ENCODE measurements at regions of chr3 and their contacts with region 1.

Region 1: DNA sequence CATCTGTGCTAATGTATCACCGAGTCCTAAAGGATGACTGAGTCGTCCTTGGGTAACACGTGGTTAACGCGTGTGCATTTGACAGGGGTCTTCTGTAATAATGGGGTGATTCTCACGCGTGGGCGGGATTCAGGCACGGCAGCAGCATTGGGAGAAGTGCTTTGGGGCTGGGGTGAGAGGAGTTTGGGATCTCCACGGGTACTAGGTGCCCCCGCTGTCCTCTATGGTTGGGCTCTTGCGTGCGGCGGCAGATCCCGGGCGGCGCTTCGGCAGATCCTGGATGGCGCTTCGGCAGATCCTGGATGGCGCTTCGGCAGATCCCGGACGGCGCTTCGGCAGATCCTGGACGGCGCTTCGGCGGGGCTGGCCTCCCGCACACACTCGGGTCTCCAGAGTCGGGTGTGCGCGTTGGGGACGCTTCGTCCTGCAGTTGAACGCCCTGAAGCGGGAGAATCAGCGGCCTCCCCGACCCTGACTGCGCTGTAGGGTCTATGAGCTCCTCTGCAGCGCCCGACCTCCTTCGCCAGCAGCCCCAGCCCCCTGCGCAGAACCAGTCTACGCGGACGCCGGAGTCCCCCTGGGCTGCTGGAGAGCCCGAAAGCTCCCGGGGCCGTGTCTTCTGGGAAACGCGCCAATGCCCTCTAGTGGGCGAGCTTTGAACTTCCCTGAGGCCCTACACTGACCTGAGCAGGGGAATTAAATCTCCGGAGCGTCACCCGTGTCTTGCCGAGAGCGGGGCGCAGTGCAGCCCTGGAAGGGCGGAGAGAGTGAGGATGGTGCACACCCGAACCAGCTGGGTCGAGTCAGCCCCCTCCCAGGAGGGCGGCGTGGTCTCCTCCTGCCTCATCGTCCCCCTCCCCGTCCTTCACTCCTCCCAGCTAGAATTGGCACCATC is 48.1 kb upstream of the EPHB3 start:
- DNase-seq: no peak
- H3K4me3 ChIP-seq: peak overlapping the region; percentile 52
- CTCF ChIP-seq: peak; percentile 84

Region 2: DNA sequence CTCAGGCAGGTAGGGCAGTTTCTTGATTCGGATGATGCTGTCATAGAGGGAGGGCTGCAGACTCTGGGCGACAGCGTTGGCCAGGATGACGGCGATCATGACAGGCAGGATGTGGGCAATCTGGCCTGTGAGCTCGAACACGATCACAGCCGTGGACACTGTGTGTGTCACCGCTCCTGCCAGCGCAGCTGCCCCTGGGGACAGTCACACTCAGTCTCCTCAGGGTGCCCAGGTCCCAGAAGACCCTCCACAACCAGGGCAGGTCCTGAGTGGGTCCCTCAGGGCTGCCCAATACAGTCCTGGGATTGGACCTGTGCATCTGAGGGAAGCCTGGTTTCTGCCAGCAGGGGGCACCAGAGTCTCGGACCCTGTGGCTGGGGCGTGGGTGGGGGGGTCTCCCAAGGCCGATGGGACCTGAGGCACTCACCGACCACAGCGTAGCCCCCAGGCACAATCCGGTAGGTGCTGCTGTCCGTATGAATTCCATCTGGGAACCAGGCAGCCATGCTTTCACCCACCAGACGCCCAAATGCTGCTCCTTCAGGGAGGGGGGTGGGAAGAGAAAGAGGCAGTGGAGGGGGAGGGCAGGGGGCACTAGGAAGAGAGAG is 159.3 kb before region 1 on chr3:
- CTCF ChIA-PET with region 1: interaction called, 15 read pairs
- POLR2A ChIA-PET with region 1: no interaction called
- DNase-seq: no peak
- H3K4me3 ChIP-seq: no peak overlapping the region
- CTCF ChIP-seq: peak; percentile 77

Region 3: GRCh38 chr3:184423561-184423960 is 90.0 kb before region 1 on chr3:
- CTCF ChIA-PET with region 1: interaction called, 30 read pairs
- POLR2A ChIA-PET with region 1: no interaction called
- DNase-seq: no peak
- H3K4me3 ChIP-seq: no peak overlapping the region
- CTCF ChIP-seq: no peak

Region 4: DNA sequence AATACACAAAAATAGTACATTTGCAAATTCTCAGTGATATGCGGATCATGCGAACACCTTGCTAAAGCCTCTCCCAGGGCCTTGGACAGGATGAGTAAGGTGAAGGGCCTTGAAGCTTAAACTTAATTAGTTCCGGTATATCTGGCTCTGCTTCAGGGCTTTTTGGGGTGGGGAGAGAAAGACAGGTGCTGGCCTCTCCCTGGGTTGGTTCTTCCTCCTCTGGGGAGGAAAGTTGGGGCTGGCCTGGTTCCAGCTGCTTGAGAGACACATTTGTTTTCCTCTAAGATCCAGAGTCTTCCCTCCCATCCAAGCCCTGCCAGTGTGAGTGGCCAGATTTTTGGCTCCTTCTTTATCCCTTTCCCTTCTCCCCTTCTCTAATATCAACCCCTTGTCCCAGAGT is 16.6 kb before region 1 on chr3:
- CTCF ChIA-PET with region 1: interaction called, 43 read pairs
- POLR2A ChIA-PET with region 1: no interaction called
- DNase-seq: no peak
- H3K4me3 ChIP-seq: no peak overlapping the region
- CTCF ChIP-seq: no peak

Region 5: DNA sequence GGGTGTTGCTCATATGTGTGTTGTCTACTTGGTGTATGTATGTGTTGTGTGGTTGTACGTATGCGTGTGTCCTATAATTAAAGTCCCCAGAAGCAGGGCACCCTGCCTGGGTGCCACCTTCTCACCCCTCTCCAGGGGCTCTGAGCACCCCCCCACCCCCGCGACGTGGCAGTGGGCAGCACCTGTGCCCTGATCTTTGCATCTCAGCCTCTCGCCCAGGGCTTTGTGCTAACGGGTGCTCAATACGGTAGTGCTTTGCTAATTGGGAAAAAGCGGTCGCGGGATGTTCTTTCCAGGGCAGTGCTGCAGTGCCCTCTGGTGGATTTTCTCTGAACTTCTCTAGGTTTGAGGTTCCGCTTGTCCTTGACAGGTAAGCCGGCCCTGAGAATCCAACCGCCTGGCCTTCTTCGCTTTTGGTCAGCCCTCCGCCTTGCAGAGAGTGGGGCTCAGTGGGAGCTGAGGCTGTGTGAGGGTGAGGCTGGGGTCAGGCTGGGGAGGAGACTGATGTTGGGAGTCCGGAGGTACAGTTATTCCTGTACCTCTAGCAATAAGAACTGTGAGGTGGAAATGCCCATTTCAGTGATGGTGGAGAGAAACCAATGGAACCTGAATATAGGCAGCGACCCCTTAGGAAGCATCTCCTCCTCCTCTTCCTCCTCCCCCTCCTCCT is 30.5 kb after region 1 on chr3:
- CTCF ChIA-PET with region 1: interaction called, 15 read pairs
- POLR2A ChIA-PET with region 1: no interaction called
- DNase-seq: no peak
- H3K4me3 ChIP-seq: no peak overlapping the region
- CTCF ChIP-seq: peak; percentile 71

Region 6: DNA sequence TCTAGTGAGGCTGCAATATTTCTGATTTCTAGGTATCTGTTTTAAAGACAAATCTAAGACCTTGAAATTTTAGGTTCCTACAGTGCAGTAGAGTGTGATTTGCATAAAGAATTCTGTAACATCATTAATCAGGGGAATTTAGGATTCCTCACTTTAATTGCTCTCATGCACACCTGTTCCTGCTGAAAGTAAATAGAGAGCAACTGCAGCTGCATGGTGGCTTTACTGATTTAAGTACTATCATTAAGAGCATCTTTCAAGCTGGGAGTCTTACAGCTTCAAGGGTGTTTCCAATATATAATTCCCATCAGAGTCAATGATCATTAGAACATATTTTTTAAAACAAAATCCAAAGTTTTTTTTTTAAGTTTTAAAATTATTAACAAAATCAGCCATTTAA is 675.3 kb after region 1 on chr3:
- CTCF ChIA-PET with region 1: no interaction called
- POLR2A ChIA-PET with region 1: no interaction called
- DNase-seq: no peak
- H3K4me3 ChIP-seq: no peak overlapping the region
- CTCF ChIP-seq: no peak